HEK293 (cell line): ENCODE measurements at regions of chr4 and their contacts with region 1.

Region 1: DNA sequence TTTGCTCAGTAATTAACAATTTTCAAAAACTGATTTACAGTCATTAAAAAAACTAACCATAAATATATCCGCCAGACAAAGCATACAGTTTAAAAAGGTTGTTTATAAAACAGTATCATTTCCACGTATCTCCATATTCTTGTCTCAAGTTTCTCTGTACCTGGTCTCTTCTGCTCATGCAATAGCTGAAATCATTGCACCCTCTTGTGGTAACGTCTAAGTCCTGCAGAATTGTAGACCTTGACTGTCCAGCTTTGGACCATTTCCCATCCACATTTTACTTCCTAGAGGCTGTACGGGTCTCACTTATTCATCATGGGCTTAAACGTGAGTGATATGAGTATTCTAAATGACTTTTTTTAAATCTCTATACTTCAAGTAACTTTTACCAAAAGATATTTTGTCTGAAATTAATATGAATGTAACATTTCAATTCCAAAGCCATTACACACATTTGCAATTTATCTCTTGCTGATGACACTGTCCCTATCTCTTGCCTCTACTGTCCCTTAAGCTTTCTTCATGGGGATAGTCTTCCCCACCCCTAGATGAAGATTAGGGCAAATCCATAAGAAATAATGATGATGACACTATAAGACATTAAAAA is 118.5 kb downstream of the BTC start:
- H3K4me3 ChIP-seq: no peak overlapping the region
- H3K27ac ChIP-seq: no peak overlapping the region
- H3K4me1 ChIP-seq: no peaks in the 10 kb centered on the region
- CTCF ChIP-seq: peak; percentile 59

Region 2: GRCh38 chr4:74320559-74321118 is 355.1 kb before region 1 on chr4:
- CTCF ChIA-PET with region 1: interaction called, 32 read pairs
- POLR2A ChIA-PET with region 1: no interaction called
- H3K4me3 ChIP-seq: no peak overlapping the region
- H3K27ac ChIP-seq: no peak overlapping the region
- H3K4me1 ChIP-seq: no peaks in the 10 kb centered on the region
- CTCF ChIP-seq: no peak

Region 3: DNA sequence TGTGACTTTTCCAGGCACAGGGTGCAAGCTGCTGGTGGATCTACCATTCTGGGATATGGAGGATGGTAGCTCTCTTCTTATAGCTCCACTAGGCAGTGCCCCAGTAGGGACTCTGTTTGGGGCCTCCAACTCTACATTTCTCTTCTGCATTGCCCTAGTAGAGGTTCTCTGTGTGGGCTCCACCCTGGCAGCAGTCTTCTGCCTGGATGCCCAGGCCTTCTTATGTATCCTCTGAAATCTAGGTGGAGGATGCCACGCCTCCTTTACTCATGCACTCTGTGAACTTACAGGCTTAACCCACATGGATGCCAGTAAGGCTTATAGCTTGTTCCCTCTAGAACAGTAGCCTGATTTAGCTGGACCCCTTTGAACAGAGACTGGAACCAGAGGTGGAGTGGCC is 331.7 kb before region 1 on chr4:
- CTCF ChIA-PET with region 1: no interaction called
- POLR2A ChIA-PET with region 1: no interaction called
- H3K4me3 ChIP-seq: no peak overlapping the region
- H3K27ac ChIP-seq: no peak overlapping the region
- H3K4me1 ChIP-seq: no peaks in the 10 kb centered on the region
- CTCF ChIP-seq: no peak

Region 4: DNA sequence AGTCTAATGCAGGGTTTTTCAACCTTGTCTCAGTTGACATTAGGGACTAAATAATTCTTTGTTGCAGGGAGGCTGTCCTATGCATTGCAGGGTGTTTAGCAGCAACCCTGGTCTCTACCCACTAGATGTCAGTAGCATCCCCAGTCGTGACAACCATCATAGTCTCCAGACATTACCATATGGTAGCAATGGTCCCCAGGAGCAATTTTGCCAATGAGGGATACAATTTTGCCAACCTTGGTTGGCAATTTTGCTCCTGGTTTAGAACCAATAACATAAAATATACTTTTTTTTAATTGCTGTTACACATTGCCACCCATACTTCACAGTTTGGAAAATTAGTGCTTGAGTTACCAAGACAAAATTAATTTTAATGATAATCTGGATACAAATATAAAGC is 304.9 kb before region 1 on chr4:
- CTCF ChIA-PET with region 1: interaction called, 11 read pairs
- POLR2A ChIA-PET with region 1: no interaction called
- H3K4me3 ChIP-seq: no peak overlapping the region
- H3K27ac ChIP-seq: no peak overlapping the region
- H3K4me1 ChIP-seq: no peaks in the 10 kb centered on the region
- CTCF ChIP-seq: 0 out of 2 replicates have a peak, but pooled peaks have one; percentile 10